ENCODE measurements at regions of chr7 and their contacts with region 1.

Region 1: DNA sequence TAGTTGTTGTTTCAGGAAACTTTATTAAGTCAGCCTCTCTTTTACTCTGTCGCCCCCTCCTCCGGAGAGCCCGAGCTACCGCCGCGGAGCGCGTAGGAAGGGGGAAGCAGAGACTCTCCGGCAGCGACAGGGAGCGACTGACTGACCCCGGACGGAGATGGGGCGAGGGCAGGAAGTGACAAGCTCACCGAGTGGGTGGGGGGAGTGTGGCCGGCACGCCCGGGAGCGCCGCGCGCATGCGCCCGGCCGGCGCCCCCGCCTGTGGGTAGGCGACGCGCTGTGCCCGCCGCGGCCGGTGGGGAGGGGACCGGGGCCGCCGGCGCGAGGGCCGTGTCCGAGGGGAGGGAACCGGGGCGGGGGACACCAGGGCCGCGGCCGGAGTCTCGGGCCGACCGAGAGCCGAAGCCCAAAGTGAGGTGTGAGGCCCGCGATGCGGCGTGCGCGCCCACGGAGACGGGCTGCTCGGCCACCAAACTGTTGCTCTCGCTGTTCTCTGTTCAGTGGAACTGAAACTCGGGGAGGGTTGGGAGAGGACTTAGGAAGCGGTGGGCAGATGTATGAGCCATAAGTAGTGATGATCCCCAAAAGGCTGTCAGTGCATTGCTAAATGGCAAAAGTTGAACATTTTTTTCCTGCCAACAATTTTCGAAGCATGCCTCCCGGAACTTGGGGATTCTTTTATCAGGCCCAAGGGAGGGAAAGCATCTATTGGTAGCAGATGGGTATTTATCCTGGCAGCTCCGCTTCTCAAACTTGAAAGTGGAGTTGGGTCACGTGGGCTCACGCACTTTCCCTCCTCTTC is at the start of gene ZNF800:
- DNase-seq: peak; percentile 97
- total RNA-seq, gene ZNF800: 26.3 TPM

Region 2: DNA sequence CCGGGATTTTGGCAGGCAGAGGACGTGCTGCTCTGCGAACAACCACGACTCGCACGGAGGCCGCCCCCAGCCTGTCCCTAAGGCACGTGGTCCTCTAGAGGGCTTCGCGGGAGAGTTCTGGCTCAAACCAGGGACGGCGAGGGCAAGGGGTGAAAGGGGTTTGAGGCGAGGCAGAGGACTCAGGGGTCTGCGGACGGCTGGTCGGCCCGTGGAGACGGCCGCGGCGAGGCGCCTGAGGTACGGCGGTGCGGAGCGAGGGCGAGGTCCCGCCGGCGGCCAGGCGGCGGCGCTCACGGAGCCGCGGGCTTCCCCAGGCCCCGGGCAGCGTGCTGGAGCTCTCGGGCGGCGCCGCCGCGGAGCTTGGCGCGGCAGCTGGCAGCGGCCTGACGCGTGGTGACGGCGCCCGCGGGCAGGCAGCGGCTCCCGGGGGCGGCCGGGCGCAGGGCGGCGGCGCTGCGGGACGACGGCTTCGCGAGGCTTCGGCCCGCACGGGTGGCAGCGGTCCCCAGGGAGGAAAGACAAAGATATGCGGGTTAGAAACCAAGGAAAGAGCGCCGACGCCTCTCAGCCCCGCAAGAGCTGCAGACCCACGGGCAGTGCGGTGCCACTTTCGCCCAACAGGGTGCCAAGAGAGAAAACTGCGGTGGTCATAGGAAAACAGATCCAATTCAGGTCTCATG is 45.1 kb before region 1 on chr7:
- intact Hi-C with region 1: loop called (anchors 5 kb)
- DNase-seq: peak; percentile 80

Region 3: DNA sequence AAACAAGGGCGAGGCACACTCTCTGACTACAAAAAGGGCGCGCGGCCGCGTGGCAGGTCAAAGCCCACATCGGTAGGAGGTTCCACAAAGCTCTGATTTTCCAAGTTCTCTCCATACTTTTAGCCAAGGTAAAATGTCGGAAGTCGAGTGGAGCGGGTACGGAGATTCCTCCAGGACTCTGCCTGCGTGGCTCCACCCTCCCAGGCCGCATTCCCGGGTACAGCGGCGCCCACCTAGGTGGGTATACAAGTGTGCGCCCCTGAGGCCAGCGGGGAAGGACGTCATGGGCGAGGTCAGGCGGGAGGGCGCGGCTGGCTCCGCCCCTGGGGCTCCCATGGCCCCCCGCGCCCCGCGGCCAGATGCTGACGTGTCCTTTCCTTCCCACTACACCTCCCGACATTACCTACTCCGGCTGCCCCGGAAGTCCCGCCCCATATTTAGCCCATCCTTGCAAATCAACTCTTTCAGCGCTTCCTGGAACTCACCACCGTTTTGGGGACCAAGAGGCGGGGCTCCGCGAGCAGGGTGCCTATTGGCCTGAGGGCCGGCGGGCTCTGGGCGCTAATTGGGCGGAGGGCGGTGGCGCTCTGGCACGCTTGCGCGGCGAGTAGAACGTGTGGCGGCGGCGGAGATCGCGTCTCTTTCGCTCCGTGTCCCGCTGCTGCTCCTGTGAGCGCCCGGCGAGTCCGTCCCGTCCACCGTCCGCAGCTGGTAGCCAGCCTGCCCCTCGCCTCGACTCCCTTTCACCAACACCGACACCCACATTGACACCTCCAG is 259.0 kb after region 1 on chr7 and contains the start of gene SND1:
- intact Hi-C with region 1: loop called (anchors 10 kb)
- DNase-seq: peak; percentile 100
- total RNA-seq, gene SND1: 66.7 TPM

Measured in cardiac septum (tissue), 1 donor.